Activated naive CD4-positive, alpha-beta T cell treated with anti-CD3 and anti-CD28 coated beads for 36 hours (primary cell): ENCODE measurements at regions of chr16 and their contacts with region 1.

Region 1: GRCh38 chr16:81403616-81404373 is 40.8 kb upstream of the CMIP start:
- DNase-seq: peak; percentile 89
- H3K4me3 Mint-ChIP-seq: no peak overlapping the region
- H3K27ac Mint-ChIP-seq: no peak overlapping the region
- H3K4me1 Mint-ChIP-seq: no peaks in the 10 kb centered on the region
- H3K27me3 Mint-ChIP-seq: no peaks in the 10 kb centered on the region

Region 2: DNA sequence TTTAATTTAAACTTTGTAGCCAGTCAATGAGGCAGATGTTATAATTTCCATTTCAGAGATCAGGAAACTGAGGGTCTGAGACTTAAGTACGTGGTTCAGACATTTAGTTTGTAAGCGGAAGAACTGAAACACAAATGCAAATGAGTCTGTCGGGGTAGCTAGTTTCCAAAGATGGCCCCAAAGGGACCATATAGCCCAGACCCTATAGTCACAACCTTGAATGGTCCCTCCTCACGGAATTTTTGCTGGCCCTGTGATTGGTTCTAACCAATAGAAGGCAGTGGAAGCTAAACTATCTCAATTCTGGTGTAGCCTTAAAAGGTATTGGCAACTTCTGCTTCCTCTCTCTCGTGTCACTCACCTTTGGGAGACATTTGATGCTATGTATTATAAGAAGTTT is 172.8 kb before region 1 on chr16:
- CTCF ChIA-PET with region 1: no interaction called
- intact Hi-C with region 1: no loop called
- DNase-seq: no peak
- H3K4me3 Mint-ChIP-seq: no peak overlapping the region
- H3K27ac Mint-ChIP-seq: no peak overlapping the region
- H3K4me1 Mint-ChIP-seq: no peaks in the 10 kb centered on the region
- H3K27me3 Mint-ChIP-seq: no peaks in the 10 kb centered on the region

Region 3: GRCh38 chr16:81497690-81498089 is 93.9 kb after region 1 on chr16:
- CTCF ChIA-PET with region 1: interaction called, 6 read pairs
- intact Hi-C with region 1: loop called (anchors 5 kb)
- DNase-seq: no peak
- H3K4me3 Mint-ChIP-seq: no peak overlapping the region
- H3K27ac Mint-ChIP-seq: no peak overlapping the region
- H3K4me1 Mint-ChIP-seq: peaks cover 33% of the 10 kb centered on the region
- H3K27me3 Mint-ChIP-seq: no peaks in the 10 kb centered on the region

Region 4: GRCh38 chr16:81696961-81697615 is 293.3 kb after region 1 on chr16:
- CTCF ChIA-PET with region 1: interaction called, 12 read pairs
- intact Hi-C with region 1: loop called (anchors 1 kb)
- DNase-seq: peak; percentile 78
- H3K4me3 Mint-ChIP-seq: no peak overlapping the region
- H3K27ac Mint-ChIP-seq: peak overlapping the region; percentile 63
- H3K4me1 Mint-ChIP-seq: no peaks in the 10 kb centered on the region
- H3K27me3 Mint-ChIP-seq: no peaks in the 10 kb centered on the region